ENCODE measurements at regions of chr15 and their contacts with region 1.

Region 1: GRCh38 chr15:97960364-97961066 is at the start of gene ARRDC4:
- DNase-seq: peak; percentile 100
- H3K4me3 ChIP-seq: peak within 1 kb of the TSS; percentile 48 to 61 (median 58)
- H3K27ac ChIP-seq: no peak within 1 kb of the TSS
- H3K4me1 ChIP-seq: peaks cover 10% of the 10 kb centered on the region
- H3K27me3 ChIP-seq: no peaks in the 10 kb centered on the region
- CTCF ChIP-seq: no peak
- POLR2A ChIP-seq: no peak
- total RNA-seq, gene ARRDC4: 0.97 and 2.5 TPM in 2 replicates

Region 2: DNA sequence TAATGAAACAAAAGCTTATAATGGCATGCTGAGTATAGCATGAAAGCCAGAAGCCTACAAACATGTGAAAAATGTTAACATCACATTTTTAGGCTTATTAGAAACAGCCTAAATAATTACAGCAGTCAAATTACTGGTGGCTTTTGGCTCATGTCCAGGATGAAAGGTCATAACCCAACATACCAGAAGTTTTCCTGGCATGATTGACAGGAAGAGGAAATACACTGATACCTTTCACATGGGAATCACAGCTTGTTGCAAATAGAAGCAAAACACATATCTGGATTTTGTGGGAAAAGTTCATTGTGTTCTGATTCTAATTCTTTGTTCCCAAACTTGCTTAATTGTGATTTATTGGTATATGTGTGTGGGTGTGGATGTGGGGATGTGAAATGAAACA is 393.6 kb before region 1 on chr15:
- CTCF ChIA-PET with region 1: no interaction called
- POLR2A ChIA-PET with region 1: no interaction called
- dilution Hi-C with region 1: no loop called
- intact Hi-C with region 1: loop called (anchors 10 kb)
- DNase-seq: peak; percentile 97
- H3K4me3 ChIP-seq: no peak overlapping the region
- H3K27ac ChIP-seq: peak overlapping the region; percentile 42
- H3K4me1 ChIP-seq: peaks cover 18% of the 10 kb centered on the region
- H3K27me3 ChIP-seq: no peaks in the 10 kb centered on the region
- CTCF ChIP-seq: no peak
- POLR2A ChIP-seq: no peak

Region 3: DNA sequence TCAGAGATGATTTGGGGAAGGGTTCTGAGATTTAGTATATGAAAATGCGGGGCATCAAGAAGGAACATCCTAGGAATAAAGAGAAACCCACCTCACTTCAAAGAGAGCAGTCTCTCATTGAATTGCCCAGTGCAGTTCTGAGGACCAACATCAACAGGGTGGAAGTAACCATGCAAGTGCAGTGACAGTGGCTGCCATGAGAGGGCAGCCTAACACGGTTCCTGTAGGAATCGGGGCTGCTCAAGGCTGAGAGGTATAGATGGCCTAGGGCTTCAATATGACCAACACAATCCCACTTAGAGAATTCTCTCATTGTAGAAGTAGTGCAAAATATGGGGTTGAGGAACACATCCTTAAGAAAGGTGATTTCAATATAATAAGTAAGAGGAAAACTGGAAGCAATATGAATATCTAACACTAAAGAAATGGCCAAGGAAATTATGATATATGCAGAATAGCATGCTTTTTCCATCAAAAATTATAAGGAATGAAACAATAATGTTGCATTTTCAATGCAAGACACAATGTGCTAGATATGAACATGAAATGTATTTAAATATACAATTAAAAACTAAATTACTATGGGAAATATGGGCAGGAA is 51.1 kb before region 1 on chr15:
- CTCF ChIA-PET with region 1: no interaction called
- POLR2A ChIA-PET with region 1: no interaction called
- dilution Hi-C with region 1: no loop called
- intact Hi-C with region 1: loop called (anchors 2 kb)
- DNase-seq: peak; percentile 63
- H3K4me3 ChIP-seq: no peak overlapping the region
- H3K27ac ChIP-seq: no peak overlapping the region
- H3K4me1 ChIP-seq: no peaks in the 10 kb centered on the region
- H3K27me3 ChIP-seq: peaks cover 0 to 4% of the 10 kb centered on the region in 2 experiments
- CTCF ChIP-seq: peak; percentile 87 to 90
- POLR2A ChIP-seq: no peak

Region 4: GRCh38 chr15:97929456-97929855 is 31.1 kb before region 1 on chr15:
- CTCF ChIA-PET with region 1: no interaction called
- POLR2A ChIA-PET with region 1: no interaction called
- dilution Hi-C with region 1: no loop called
- intact Hi-C with region 1: no loop called
- DNase-seq: no peak
- H3K4me3 ChIP-seq: no peak overlapping the region
- H3K27ac ChIP-seq: no peak overlapping the region
- H3K4me1 ChIP-seq: no peaks in the 10 kb centered on the region
- H3K27me3 ChIP-seq: no peaks in the 10 kb centered on the region
- CTCF ChIP-seq: no peak
- POLR2A ChIP-seq: no peak

Region 5: DNA sequence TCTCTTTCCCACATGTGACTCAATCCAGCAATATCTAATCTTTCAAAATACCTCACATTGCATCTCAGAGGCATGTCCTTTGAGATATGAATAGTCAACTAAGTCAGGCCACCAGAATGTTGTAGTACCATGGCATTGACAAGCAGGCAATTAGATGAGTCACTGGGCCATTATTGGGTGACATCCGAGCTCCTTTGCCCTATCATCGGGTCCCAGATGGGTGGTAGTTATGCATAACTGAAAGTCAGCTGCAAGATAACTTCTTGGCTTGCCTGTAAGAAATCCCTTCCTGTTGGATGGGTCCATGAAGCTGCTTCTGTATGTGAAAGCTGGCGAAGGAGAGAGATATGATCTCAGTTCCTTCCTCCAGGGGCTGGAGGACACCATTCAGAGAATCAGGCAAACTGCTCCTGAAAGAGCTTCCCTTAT is 32.8 kb after region 1 on chr15:
- CTCF ChIA-PET with region 1: no interaction called
- POLR2A ChIA-PET with region 1: no interaction called
- dilution Hi-C with region 1: no loop called
- intact Hi-C with region 1: loop called (anchors 1 kb)
- DNase-seq: peak; percentile 58
- H3K4me3 ChIP-seq: no peak overlapping the region
- H3K27ac ChIP-seq: peak overlapping the region; percentile 42
- H3K4me1 ChIP-seq: peaks cover 13% of the 10 kb centered on the region
- H3K27me3 ChIP-seq: peaks cover 0 to 2% of the 10 kb centered on the region in 2 experiments
- CTCF ChIP-seq: no peak
- POLR2A ChIP-seq: no peak

Region 6: DNA sequence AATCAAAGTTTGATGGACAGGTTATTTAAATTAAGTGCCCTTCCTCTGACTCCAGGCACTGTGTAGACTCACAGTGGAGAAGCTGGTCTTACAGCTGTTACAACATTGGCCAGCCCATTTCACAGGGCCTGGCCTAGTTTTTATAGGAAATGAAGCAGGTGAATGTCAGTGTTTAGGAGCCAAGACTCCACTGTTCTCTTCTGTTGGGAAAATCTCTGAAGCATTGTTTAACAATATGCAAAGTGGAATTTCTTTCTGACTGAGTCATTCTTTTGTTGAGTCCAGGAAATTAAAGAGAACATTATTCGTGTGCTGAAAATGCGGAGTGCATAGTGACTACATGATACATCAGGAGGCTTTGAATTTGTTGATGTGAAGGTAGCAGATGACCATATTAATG is 64.7 kb after region 1 on chr15:
- CTCF ChIA-PET with region 1: no interaction called
- POLR2A ChIA-PET with region 1: no interaction called
- dilution Hi-C with region 1: no loop called
- intact Hi-C with region 1: loop called (anchors 1 kb)
- DNase-seq: peak; percentile 93
- H3K4me3 ChIP-seq: no peak overlapping the region
- H3K27ac ChIP-seq: peak overlapping the region; percentile 77
- H3K4me1 ChIP-seq: peaks cover 31% of the 10 kb centered on the region
- H3K27me3 ChIP-seq: no peaks in the 10 kb centered on the region
- CTCF ChIP-seq: no peak
- POLR2A ChIP-seq: no peak

Region 7: GRCh38 chr15:98067339-98067738 is 106.8 kb after region 1 on chr15:
- CTCF ChIA-PET with region 1: no interaction called
- POLR2A ChIA-PET with region 1: no interaction called
- dilution Hi-C with region 1: no loop called
- intact Hi-C with region 1: no loop called
- DNase-seq: peak; percentile 7
- H3K4me3 ChIP-seq: no peak overlapping the region
- H3K27ac ChIP-seq: no peak overlapping the region
- H3K4me1 ChIP-seq: no peaks in the 10 kb centered on the region
- H3K27me3 ChIP-seq: no peaks in the 10 kb centered on the region
- CTCF ChIP-seq: no peak
- POLR2A ChIP-seq: no peak

Region 8: DNA sequence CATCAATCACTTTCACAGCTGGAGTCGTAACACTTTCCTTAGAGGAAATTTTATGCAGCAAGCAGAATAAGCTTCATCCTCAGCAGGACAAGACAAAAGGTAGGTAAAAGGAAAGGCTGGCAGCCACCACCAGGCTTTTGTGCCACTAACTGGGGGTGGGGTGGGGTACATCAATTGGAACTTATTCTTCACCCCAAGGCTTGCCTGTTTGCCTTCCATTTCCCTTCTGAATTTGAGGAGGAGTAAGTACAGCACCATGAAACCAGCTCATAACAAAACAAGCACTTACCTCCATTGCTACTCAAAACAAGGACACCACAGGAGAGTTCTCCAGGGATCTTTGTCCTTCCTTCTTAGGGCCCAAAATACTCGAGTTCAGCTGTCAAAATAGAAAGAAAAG is 296.8 kb after region 1 on chr15:
- CTCF ChIA-PET with region 1: no interaction called
- POLR2A ChIA-PET with region 1: no interaction called
- dilution Hi-C with region 1: no loop called
- intact Hi-C with region 1: no loop called
- DNase-seq: no peak
- H3K4me3 ChIP-seq: no peak overlapping the region
- H3K27ac ChIP-seq: no peak overlapping the region
- H3K4me1 ChIP-seq: no peaks in the 10 kb centered on the region
- H3K27me3 ChIP-seq: no peaks in the 10 kb centered on the region
- CTCF ChIP-seq: no peak
- POLR2A ChIP-seq: no peak

Region 9: DNA sequence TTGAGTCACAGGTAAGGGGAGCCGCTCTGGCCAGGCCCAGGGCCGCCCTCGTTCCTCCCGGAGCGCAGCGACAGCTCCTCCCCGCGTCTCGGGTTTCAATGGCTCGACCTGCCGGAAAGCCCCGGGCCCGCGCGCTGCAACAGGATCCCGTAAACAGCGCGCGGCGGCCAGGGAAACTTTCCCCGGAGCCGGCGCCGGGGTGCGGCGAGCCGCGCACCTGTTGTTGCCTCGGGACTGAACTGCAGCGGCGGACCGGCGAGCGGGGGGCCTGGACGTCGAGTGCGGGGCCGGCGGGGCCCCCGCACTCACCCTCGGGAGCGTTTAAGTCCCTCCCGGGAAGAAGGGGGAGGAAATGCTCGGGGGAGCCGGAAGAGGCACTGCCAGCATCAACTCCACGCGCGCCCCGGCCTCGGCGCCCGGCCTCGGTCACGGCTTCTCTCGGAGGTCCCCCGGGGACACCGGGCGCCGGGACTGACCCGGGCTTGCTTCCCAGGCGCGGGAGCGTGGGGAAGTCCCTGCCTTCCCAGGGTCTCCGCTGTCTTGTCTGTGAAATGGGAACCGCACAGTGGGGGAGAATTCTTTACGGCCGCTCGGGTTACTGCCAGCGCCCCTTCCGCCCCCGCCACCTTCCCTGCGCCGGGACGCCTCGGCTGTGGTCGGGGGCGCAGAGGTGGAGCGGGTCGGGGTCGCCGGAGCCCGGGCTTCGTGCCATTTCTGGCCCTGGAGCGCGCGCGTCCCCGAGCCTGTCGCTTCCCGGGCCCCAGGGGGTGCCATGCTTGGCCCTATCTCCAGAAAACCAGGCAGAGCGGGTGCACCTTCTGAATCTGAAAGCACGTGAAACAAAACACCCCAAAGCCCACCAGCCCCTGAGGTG is 1054.5 kb after region 1 on chr15:
- CTCF ChIA-PET with region 1: no interaction called
- POLR2A ChIA-PET with region 1: no interaction called
- dilution Hi-C with region 1: no loop called
- intact Hi-C with region 1: loop called (anchors 10 kb)
- DNase-seq: peak; percentile 41
- H3K4me3 ChIP-seq: peak overlapping the region; percentile 6 to 45 (median 34)
- H3K27ac ChIP-seq: no peak overlapping the region
- H3K4me1 ChIP-seq: no peaks in the 10 kb centered on the region
- H3K27me3 ChIP-seq: peaks cover 7 to 9% of the 10 kb centered on the region in 2 experiments
- CTCF ChIP-seq: no peak
- POLR2A ChIP-seq: no peak

Measured in endothelial cell of umbilical vein (primary cell).